Naive thymus-derived CD4-positive, alpha-beta T cell (primary cell): ENCODE measurements at regions of chr2 and their contacts with region 1.

Region 1: GRCh38 chr2:175167792-175168563 is at the start of gene ATF2:
- DNase-seq: peak; percentile 87 to 100 (median 98)
- ATAC-seq: peak; percentile 95
- H3K4me3 ChIP-seq: peak within 1 kb of the TSS; percentile 91
- H3K4me3 Mint-ChIP-seq: peak within 1 kb of the TSS; percentile 93 to 100 (median 98)
- H3K27ac ChIP-seq: peak within 1 kb of the TSS; percentile 91
- H3K27ac Mint-ChIP-seq: peak within 1 kb of the TSS; percentile 94 to 100 (median 99)
- H3K4me1 ChIP-seq: peaks cover 13 to 20% of the 10 kb centered on the region in 2 donors
- H3K4me1 Mint-ChIP-seq: peaks cover 21 to 75% (median 55%) of the 10 kb centered on the region in 7 donors
- H3K27me3 ChIP-seq: no peaks in the 10 kb centered on the region
- H3K27me3 Mint-ChIP-seq: no peaks in the 10 kb centered on the region
- total RNA-seq, gene ATF2: 40.5 to 67.2 (median 58.7) TPM

Region 2: GRCh38 chr2:174326161-174327020 is 841.6 kb before region 1 on chr2:
- CTCF ChIA-PET with region 1: no interaction called
- POLR2A ChIA-PET with region 1: no interaction called
- intact Hi-C with region 1: loop called in 1 of 2 experiments (anchors 5 kb)
- DNase-seq: peak in 4 of 9 donors; percentile 24 to 52 (median 32)
- ATAC-seq: peak; percentile 43
- H3K4me3 ChIP-seq: peak overlapping the region; percentile 31
- H3K4me3 Mint-ChIP-seq: peak overlapping the region; percentile 75 to 86 (median 82)
- H3K27ac ChIP-seq: no peak overlapping the region
- H3K27ac Mint-ChIP-seq: peak overlapping the region in 3 of 9 donors; percentile 1 to 39 (median 4)
- H3K4me1 ChIP-seq: peaks cover 13 to 15% of the 10 kb centered on the region in 2 donors
- H3K4me1 Mint-ChIP-seq: peaks cover 15 to 37% (median 23%) of the 10 kb centered on the region in 7 donors
- H3K27me3 ChIP-seq: peaks cover 45 to 55% of the 10 kb centered on the region in 2 donors
- H3K27me3 Mint-ChIP-seq: peaks cover 85 to 95% (median 86%) of the 10 kb centered on the region in 5 donors

Region 3: GRCh38 chr2:174492963-174493431 is 675.0 kb before region 1 on chr2:
- CTCF ChIA-PET with region 1: no interaction called
- POLR2A ChIA-PET with region 1: no interaction called
- intact Hi-C with region 1: loop called in 1 of 2 experiments (anchors 1 kb)
- DNase-seq: peak; percentile 18 to 89 (median 85)
- ATAC-seq: peak; percentile 95
- H3K4me3 ChIP-seq: peak overlapping the region; percentile 36
- H3K4me3 Mint-ChIP-seq: peak overlapping the region; percentile 74 to 92 (median 87)
- H3K27ac ChIP-seq: peak overlapping the region; percentile 85
- H3K27ac Mint-ChIP-seq: peak overlapping the region; percentile 91 to 100 (median 98)
- H3K4me1 ChIP-seq: peaks cover 49 to 50% of the 10 kb centered on the region in 2 donors
- H3K4me1 Mint-ChIP-seq: peaks cover 40 to 87% (median 77%) of the 10 kb centered on the region in 7 donors
- H3K27me3 ChIP-seq: no peaks in the 10 kb centered on the region
- H3K27me3 Mint-ChIP-seq: no peaks in the 10 kb centered on the region

Region 4: GRCh38 chr2:174682578-174683391 is 485.2 kb before region 1 on chr2:
- CTCF ChIA-PET with region 1: no interaction called
- POLR2A ChIA-PET with region 1: no interaction called
- intact Hi-C with region 1: loop called in 1 of 2 experiments (anchors 5 kb)
- DNase-seq: peak; percentile 56 to 73 (median 71)
- ATAC-seq: peak; percentile 78
- H3K4me3 ChIP-seq: peak overlapping the region; percentile 72
- H3K4me3 Mint-ChIP-seq: peak overlapping the region; percentile 92 to 99 (median 96)
- H3K27ac ChIP-seq: peak overlapping the region; percentile 88
- H3K27ac Mint-ChIP-seq: peak overlapping the region; percentile 91 to 98 (median 96)
- H3K4me1 ChIP-seq: peaks cover 11% of the 10 kb centered on the region in 2 donors
- H3K4me1 Mint-ChIP-seq: peaks cover 34 to 69% (median 61%) of the 10 kb centered on the region in 7 donors
- H3K27me3 ChIP-seq: no peaks in the 10 kb centered on the region
- H3K27me3 Mint-ChIP-seq: no peaks in the 10 kb centered on the region

Region 5: DNA sequence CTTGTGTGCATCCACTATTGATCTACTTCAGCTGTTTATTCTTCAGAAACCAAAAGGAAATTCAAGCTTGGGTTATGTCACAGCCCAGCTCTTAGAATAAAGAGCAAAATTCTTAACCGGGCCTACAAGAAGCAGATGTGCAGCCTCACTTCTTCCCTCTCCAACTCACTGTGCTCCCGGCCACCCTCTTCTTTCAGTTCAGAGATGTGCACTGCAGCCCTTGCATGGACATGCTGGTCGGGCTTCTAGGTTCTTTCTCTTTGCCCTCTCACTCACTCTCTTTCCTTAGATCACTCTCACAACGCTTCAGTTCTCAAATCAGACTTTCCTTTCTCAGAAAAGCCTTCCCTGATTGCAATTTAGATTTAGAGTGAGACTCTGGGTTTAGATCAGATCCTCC is 266.9 kb before region 1 on chr2:
- CTCF ChIA-PET with region 1: no interaction called
- POLR2A ChIA-PET with region 1: no interaction called
- intact Hi-C with region 1: loop called in 1 of 2 experiments (anchors 10 kb)
- DNase-seq: peak in 8 of 9 donors; percentile 8 to 42 (median 26)
- ATAC-seq: peak; percentile 33
- H3K4me3 ChIP-seq: no peak overlapping the region
- H3K4me3 Mint-ChIP-seq: peak overlapping the region; percentile 1 to 95 (median 78)
- H3K27ac ChIP-seq: peak overlapping the region; percentile 76
- H3K27ac Mint-ChIP-seq: peak overlapping the region; percentile 76 to 97 (median 93)
- H3K4me1 ChIP-seq: peaks cover 0 to 17% of the 10 kb centered on the region in 2 donors
- H3K4me1 Mint-ChIP-seq: peaks cover 6 to 45% (median 29%) of the 10 kb centered on the region in 7 donors
- H3K27me3 ChIP-seq: no peaks in the 10 kb centered on the region
- H3K27me3 Mint-ChIP-seq: no peaks in the 10 kb centered on the region

Region 6: DNA sequence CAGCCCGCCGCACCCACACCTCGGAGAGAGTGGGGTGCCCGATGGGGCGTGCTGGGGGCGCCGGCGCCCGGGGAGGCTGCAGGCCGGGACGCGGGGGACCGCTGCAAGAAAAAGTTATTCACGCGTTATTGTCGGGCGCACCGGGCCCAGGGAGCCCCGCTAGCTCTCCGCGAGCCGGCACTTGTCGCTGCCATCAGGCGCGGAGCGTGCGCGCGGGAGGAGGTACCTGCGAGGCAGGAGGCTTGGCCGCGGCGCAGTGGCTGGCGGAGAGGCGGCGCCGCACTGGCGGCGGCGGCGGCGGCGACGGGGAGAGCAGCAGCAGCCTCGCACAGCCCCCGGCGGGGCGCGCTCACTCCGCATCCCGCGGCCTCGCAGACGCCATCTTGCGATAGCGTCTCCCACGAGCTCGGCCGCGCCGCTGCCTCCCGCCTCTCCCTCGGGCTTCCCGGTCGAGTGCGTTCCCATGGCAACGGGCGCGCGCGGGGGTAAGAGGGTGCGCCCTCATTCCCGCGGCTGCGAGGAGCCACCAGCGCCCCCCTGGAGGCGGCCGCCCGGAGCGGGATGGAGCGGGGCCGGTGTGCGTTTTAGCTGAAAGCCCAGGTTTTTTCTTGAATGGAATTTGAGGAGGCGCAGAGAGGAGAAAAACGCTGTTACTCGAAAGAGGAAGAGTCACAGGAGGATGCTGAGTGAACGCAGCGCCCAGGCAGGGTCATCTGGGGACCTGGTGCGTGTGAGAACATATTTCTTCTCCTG is 162.8 kb before region 1 on chr2 and contains the start of gene CHN1:
- CTCF ChIA-PET with region 1: no interaction called
- POLR2A ChIA-PET with region 1: no interaction called
- intact Hi-C with region 1: no loop called
- DNase-seq: peak; percentile 48 to 73 (median 63)
- ATAC-seq: peak; percentile 97
- H3K4me3 ChIP-seq: peak within 1 kb of the TSS; percentile 55
- H3K4me3 Mint-ChIP-seq: peak within 1 kb of the TSS; percentile 82 to 88 (median 84)
- H3K27ac ChIP-seq: no peak within 1 kb of the TSS
- H3K27ac Mint-ChIP-seq: peak within 1 kb of the TSS in 5 of 9 donors; percentile 12 to 41 (median 34)
- H3K4me1 ChIP-seq: peaks cover 0 to 6% of the 10 kb centered on the region in 2 donors
- H3K4me1 Mint-ChIP-seq: peaks cover 0 to 12% (median 5%) of the 10 kb centered on the region in 7 donors
- H3K27me3 ChIP-seq: peaks cover 9 to 14% of the 10 kb centered on the region in 2 donors
- H3K27me3 Mint-ChIP-seq: peaks cover 52 to 77% (median 59%) of the 10 kb centered on the region in 5 donors
- total RNA-seq, gene CHN1: 0.81 to 3.5 (median 2.3) TPM

Region 7: DNA sequence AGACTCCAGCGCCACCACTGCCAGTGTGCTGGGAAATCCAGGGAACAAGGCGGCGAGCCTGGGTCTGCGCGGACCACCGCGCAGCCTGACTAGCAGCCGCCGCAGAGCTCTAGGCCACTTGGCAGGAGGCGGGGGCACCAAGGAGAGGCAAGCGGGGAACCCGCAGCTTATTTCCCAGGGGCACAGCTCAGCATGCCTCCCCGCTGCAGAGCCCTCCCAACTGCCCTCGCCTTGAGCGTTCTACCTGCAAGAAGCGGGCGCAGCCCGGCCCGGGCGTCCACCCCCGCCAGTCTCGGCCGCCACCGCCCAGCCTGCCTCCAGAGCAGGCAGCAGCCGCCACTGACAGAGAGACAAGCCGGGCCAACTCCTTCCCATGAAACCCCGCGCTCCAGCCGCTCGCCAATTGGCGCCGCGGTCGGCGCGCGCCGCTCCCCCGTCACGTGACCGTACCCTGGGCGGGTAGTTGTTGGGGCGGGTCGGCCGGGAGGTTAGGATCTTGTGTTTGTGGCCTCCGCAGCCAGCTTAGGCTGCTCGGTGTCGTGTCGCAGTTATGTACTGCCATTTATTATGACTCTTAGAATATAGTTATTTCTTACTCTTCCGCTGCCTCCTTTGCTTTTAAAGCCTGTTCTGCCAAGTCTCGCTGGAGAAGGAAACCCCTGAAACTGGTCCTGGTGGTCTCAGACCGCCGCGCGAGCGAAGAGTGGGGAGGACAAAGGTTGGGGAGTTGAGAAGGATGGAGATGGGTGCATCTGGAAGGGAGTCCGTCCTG is 834.1 kb after region 1 on chr2 and contains the start of gene LNPK:
- CTCF ChIA-PET with region 1: no interaction called
- POLR2A ChIA-PET with region 1: no interaction called
- intact Hi-C with region 1: loop called (anchors 1 to 2 kb)
- DNase-seq: peak; percentile 82 to 93 (median 91)
- ATAC-seq: peak; percentile 94
- H3K4me3 ChIP-seq: peak within 1 kb of the TSS; percentile 84
- H3K4me3 Mint-ChIP-seq: peak within 1 kb of the TSS; percentile 89 to 96 (median 92)
- H3K27ac ChIP-seq: peak within 1 kb of the TSS; percentile 75
- H3K27ac Mint-ChIP-seq: peak within 1 kb of the TSS; percentile 79 to 99 (median 92)
- H3K4me1 ChIP-seq: peaks cover 11 to 16% of the 10 kb centered on the region in 2 donors
- H3K4me1 Mint-ChIP-seq: peaks cover 18 to 35% (median 31%) of the 10 kb centered on the region in 7 donors
- H3K27me3 ChIP-seq: no peaks in the 10 kb centered on the region
- H3K27me3 Mint-ChIP-seq: peaks cover 0 to 9% (median 0%) of the 10 kb centered on the region in 5 donors
- total RNA-seq, gene LNPK: 19.4 to 36.8 (median 24.0) TPM